Activated T-helper 1 cell treated with anti-CD3 and anti-CD28 coated beads, Interleukin-12 subunit alpha, Interleukin-12 subunit beta, Interleukin-2, Interleukin-4 antibody, amounts not matched to agents 30 ng/mL and 10 ng/mL and 1 ng/mL, durations not matched to agents 14 hours and 24 hours and 36 hours (primary cell): ENCODE measurements at regions of chr3 and their contacts with region 1.

Region 1: GRCh38 chr3:169149349-169149890 is 514.1 kb downstream of the MECOM start:
- DNase-seq: peak; percentile 63
- H3K4me3 Mint-ChIP-seq: no peak overlapping the region
- H3K27ac Mint-ChIP-seq: no peak overlapping the region
- H3K4me1 Mint-ChIP-seq: peaks cover 27% of the 10 kb centered on the region
- H3K27me3 Mint-ChIP-seq: peaks cover 65% of the 10 kb centered on the region

Region 2: DNA sequence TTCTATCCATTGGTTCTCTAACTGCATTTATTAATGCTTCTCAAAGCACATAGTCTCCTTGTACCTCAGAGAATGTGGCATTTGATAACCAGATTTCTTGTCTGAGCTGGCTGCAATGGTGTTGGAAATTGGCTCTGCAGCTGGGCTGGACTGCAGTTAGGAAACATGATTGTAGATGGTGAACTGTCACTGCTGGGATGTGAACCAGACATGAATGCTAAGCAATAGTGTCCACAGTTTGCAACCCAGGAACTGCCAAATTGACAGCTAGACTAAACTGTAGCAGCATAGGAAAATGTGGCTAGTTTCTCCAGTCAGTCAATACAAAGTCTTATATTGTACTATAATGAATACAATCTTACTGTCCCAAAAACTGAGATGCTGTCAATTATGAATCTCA is 397.1 kb before region 1 on chr3:
- intact Hi-C with region 1: no loop called
- DNase-seq: no peak
- H3K4me3 Mint-ChIP-seq: no peak overlapping the region
- H3K27ac Mint-ChIP-seq: no peak overlapping the region
- H3K4me1 Mint-ChIP-seq: no peaks in the 10 kb centered on the region
- H3K27me3 Mint-ChIP-seq: no peaks in the 10 kb centered on the region

Region 3: DNA sequence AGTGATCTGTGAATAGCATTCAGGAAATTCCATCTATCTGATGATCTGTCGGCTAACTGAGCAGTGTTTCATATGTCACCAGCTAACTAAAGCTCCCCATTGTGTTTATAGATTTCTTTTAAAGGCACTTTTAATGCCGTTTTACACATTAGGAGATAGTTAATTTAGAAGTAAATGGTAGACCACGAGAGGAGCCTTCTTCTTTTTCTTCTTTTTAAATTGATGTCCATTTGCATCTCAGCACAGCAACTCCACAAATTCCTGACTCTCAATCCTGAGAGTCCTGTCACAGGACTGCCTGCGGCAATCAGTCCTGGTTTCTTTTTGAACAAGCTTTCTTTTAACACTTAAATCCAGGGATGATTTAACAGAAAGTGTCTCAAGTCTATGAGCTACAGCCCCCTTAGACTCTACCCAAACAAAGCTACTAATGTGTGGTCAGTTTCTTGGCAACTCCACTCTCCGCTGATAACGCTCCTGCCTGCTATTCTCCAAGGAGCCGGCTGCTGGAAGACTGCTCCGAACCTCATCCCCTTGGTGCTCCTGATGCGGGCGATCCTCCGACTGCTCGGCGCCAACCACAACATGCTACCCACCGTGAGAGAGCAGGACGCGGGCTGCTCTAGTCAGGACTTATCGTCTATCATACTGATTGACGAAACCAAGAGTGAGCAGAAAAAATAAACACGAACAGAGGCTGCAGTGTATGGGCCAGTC is 92.7 kb after region 1 on chr3:
- intact Hi-C with region 1: loop called (anchors 5 kb)
- DNase-seq: no peak
- H3K4me3 Mint-ChIP-seq: no peak overlapping the region
- H3K27ac Mint-ChIP-seq: no peak overlapping the region
- H3K4me1 Mint-ChIP-seq: no peaks in the 10 kb centered on the region
- H3K27me3 Mint-ChIP-seq: peaks cover 37% of the 10 kb centered on the region

Region 4: GRCh38 chr3:169295126-169295525 is 145.7 kb after region 1 on chr3:
- intact Hi-C with region 1: loop called (anchors 1 kb)
- DNase-seq: no peak
- H3K4me3 Mint-ChIP-seq: no peak overlapping the region
- H3K27ac Mint-ChIP-seq: no peak overlapping the region
- H3K4me1 Mint-ChIP-seq: no peaks in the 10 kb centered on the region
- H3K27me3 Mint-ChIP-seq: peaks cover 5% of the 10 kb centered on the region

Region 5: DNA sequence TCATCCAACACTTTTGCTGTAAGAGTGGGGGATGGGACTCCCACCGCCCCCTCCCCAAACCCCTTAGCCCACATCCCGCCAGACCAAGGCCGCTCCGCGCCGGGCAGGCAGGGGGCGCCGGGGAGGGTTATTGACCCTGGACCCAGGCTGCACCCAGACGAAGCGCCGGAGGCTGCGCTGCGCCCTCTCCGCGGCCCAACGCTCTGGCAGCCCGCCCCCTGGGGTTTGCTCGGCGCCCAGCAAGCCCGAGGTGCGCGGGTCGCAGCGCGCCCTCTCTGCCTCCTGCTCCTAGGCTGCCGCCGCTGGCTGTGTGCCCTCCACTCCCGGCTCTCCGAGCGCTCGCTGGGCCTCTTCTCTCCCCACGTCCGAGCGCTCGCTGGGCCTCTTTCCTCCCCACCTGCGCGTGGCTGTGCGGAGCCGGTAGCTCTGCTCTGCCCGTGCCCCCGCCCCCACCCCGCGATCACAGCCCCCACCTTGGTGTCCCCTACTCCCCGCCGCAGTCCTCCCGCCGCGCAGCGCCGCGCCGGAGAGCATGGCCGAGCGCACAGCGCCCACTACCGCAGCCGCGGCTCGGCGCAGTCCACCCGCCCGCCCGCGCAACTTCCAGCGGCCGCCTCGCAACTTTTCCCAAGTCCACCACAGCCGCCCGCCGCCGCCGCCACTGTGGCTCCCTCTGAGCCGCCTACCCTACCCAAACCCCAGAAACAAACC is 512.9 kb after region 1 on chr3:
- intact Hi-C with region 1: loop called (anchors 1 kb)
- DNase-seq: no peak
- H3K4me3 Mint-ChIP-seq: peak overlapping the region; percentile 83
- H3K27ac Mint-ChIP-seq: no peak overlapping the region
- H3K4me1 Mint-ChIP-seq: peaks cover 56% of the 10 kb centered on the region
- H3K27me3 Mint-ChIP-seq: peaks cover 88% of the 10 kb centered on the region

Region 6: DNA sequence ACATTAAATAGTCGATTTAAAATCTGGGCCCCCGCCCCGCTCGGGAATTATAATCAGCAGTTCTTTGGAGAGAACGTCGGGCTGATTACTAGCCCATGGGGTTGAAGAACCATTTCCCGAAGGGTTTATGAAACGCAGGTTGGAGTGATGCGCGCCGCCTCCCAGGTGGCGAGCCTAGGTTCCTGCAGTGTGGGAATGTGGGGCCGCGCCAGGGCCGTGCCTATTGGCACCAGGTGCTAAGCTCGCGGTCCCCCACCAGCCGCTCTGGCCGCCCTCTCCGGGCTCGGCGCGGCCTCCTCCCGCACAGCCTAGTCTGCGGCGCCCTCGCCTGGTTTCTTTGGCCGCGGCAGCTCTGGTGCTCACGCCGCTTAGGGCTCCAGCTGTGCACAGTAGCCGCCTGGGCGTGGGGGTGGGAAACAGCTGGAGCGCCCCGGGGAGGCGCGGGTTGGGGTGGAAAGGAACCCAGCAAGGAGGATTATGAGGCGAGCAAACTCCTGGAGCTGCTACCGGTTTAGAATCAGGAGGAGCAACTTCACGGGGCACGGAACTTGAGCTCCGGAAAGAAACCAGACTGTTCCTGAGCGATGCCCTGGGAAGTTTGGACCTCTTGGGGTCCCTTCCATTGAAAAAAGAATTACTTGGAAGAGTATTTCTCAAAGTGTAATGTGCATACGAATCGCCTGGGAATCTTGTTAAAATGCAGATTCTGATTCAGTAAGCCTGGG is 519.7 kb after region 1 on chr3:
- intact Hi-C with region 1: loop called (anchors 1 kb)
- DNase-seq: no peak
- H3K4me3 Mint-ChIP-seq: peak overlapping the region; percentile 25
- H3K27ac Mint-ChIP-seq: no peak overlapping the region
- H3K4me1 Mint-ChIP-seq: peaks cover 27% of the 10 kb centered on the region
- H3K27me3 Mint-ChIP-seq: peaks cover 87% of the 10 kb centered on the region

Region 7: DNA sequence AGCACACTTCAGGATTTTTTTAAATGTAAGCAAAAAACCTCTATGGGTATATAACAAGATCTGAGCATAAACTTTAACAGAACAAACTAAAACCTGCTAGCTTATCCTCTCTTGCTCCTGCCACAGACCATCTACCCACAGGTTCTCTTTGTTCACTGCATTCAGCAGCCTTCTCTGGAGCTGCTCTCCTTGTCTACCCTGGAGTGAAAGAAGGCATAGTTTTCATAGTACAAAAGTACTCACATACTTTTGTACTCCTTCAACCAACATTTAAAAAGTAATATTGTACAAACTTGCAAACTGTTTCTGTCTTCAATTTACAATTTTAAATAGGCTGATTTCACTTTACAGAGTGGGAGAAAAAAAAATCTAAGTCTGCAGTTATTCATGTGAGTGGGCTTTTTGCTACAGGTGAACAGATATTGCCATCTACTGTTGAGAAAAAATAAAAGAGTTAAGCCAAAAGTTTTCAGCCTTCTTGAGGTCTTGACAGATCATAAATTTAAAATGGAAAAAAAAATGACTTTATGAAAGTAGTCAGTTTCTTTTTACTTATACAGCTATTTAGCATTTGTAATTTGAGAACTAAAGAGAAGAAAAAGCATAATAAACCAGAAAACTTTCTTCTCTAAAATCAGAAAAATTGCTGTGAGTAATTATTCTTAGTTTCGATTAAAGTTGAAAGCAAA is 595.1 kb after region 1 on chr3:
- intact Hi-C with region 1: loop called (anchors 2 kb)
- DNase-seq: no peak
- H3K4me3 Mint-ChIP-seq: no peak overlapping the region
- H3K27ac Mint-ChIP-seq: no peak overlapping the region
- H3K4me1 Mint-ChIP-seq: peaks cover 8% of the 10 kb centered on the region
- H3K27me3 Mint-ChIP-seq: peaks cover 26% of the 10 kb centered on the region

Region 8: DNA sequence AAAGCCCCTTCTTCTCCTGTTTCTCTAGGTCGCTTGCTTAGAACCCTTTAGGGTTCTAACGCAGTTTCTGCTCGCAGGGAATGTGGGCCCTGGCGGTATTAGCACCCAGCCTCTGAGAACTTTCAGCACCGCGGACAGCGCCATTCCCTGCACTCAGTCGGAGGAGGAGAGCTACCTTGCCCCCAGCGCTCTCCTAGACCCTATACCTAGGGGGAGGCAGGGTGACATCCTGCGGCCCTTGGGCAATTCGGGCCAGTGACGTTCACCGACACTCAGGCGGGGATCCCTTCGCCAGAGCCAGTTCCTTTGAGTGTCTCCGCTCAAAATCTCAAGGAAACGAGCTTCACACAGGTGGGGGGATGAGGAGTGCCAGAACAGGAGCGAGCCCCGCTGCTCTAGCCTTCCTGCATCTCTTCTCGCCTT is 1435.2 kb after region 1 on chr3:
- intact Hi-C with region 1: loop called (anchors 5 kb)
- DNase-seq: peak; percentile 11
- H3K4me3 Mint-ChIP-seq: no peak overlapping the region
- H3K27ac Mint-ChIP-seq: no peak overlapping the region
- H3K4me1 Mint-ChIP-seq: no peaks in the 10 kb centered on the region
- H3K27me3 Mint-ChIP-seq: peaks cover 38% of the 10 kb centered on the region